Activated naive CD8-positive, alpha-beta T cell treated with anti-CD3 and anti-CD28 coated beads, Interleukin-2, amount 10 ng/mL, durations not matched to agents 7 days and 5 days (primary cell): ENCODE measurements at regions of chr1 and their contacts with region 1.

Region 1: DNA sequence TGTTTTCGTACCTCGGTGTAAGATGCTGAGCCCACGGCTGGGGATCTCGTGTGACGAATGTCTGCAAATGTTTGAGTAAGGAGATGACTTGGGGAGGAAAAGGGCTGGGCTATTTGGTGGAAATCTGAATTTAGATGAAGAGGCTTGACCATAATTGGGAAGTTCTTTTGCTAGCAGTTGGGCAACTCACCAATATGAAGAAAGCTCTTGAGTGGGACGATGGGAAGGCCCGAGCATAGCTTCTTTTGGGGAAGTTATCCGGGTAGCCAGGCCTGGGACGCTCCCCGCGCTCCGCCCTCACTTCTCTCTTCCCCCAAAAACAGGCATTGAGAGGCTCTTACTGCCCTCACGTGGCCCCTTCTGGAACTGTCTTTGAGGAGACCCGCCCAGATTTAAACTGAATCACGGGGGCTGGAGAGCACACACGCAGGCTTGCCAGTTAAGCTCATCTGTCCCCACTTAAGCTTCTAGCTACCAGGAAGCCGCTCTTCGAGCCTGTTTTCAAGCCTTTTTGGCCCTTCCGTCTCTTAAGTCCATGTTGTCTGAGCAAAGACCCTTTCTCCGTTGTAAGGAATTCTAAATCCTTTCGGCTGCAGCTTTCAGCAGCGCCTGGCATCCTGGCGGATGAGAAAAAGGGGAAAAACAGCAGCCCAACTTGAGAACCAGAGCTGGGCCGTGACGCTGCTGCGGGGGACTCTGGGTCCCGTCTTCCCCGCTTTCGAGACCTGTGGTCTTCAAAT is 93.1 kb downstream of the NID1 start:
- DNase-seq: peak; percentile 88
- ATAC-seq: peak; percentile 98
- H3K4me3 Mint-ChIP-seq: peak overlapping the region; percentile 83
- H3K27ac Mint-ChIP-seq: peak overlapping the region; percentile 96
- H3K4me1 Mint-ChIP-seq: peaks cover 19% of the 10 kb centered on the region
- H3K27me3 Mint-ChIP-seq: no peaks in the 10 kb centered on the region

Region 2: DNA sequence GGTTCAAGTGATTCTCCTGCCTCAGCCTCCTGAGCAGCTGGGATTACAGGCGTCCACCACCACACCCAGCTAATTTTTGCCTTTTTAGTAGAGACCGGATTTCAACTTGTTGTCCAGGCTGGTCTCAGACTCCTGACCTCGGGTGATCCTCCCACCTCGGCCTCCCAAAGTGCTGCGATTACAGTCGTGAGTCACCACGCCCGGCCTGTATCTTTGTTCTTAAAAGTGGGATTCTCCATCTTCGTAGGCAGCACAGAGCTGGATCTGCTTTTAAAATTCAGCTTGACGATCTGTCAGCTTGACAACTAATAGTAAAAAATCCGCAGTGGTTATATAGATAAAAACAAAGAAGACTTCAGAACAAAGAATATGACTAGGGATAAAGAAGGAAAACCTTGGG is 319.4 kb before region 1 on chr1:
- POLR2A ChIA-PET with region 1: interaction called, 10 read pairs
- DNase-seq: no peak
- ATAC-seq: no peak
- H3K4me3 Mint-ChIP-seq: no peak overlapping the region
- H3K27ac Mint-ChIP-seq: no peak overlapping the region
- H3K4me1 Mint-ChIP-seq: peaks cover 9% of the 10 kb centered on the region
- H3K27me3 Mint-ChIP-seq: peaks cover 51% of the 10 kb centered on the region

Region 3: GRCh38 chr1:235866913-235867845 is 104.6 kb before region 1 on chr1:
- POLR2A ChIA-PET with region 1: interaction called, 60 read pairs
- DNase-seq: peak; percentile 100
- ATAC-seq: peak; percentile 67
- H3K4me3 Mint-ChIP-seq: peak overlapping the region; percentile 98
- H3K27ac Mint-ChIP-seq: peak overlapping the region; percentile 97
- H3K4me1 Mint-ChIP-seq: peaks cover 52% of the 10 kb centered on the region
- H3K27me3 Mint-ChIP-seq: no peaks in the 10 kb centered on the region

Region 4: DNA sequence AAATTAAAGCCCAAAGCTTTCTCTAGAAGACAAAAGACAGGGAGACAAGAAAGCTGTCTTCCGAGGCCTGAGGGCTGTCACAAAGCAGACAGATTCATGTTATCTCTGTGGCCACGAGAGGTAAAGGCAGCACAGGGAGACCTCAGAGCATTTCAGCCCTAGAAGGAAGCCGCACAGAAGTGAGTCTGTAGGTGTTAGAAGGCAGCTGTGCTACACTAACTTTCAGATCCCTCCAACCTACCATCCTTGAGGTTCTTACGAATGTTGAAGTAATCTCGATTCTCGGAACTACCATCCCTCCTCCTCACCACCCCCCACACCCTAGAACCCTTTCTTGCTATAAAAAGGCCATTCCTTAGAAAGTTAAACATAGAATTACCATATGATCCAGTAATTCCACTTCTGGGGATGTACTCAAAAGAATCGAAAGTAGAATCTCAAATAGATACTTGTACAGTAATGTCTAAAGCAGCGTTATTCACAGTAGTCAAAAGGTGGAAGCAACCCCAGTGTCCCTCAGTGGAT is 83.6 kb before region 1 on chr1:
- POLR2A ChIA-PET with region 1: interaction called, 12 read pairs
- DNase-seq: no peak
- ATAC-seq: peak; percentile 96
- H3K4me3 Mint-ChIP-seq: peak overlapping the region; percentile 77
- H3K27ac Mint-ChIP-seq: peak overlapping the region; percentile 95
- H3K4me1 Mint-ChIP-seq: peaks cover 42% of the 10 kb centered on the region
- H3K27me3 Mint-ChIP-seq: no peaks in the 10 kb centered on the region

Region 5: DNA sequence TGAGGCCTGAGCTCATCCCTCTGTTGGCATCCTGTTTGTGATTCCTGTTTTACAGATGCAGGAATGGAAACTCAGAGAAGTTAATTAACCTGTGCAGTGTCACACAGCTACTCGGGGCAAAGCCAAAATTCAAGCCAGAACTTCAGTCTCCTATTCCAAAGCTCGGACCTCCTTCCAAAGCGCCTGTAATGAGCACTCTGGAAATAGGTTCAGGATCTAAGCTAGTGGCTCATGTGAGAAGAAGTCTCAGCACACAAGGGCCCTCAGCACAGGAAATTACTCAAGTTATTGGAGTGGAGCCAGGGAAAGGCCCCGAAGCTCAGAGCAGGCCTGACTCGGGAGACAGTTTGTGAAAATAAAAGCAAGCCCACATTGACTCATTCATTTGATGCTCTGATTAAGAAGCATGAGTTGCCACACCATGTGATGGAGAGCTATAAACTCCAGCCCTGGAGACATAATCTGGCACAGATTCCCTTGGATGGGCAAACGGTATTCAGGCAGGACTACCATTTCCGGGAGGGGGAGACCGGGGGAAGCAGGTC is 54.4 kb before region 1 on chr1:
- POLR2A ChIA-PET with region 1: no interaction called
- DNase-seq: no peak
- ATAC-seq: peak; percentile 78
- H3K4me3 Mint-ChIP-seq: peak overlapping the region; percentile 57
- H3K27ac Mint-ChIP-seq: no peak overlapping the region
- H3K4me1 Mint-ChIP-seq: peaks cover 18% of the 10 kb centered on the region
- H3K27me3 Mint-ChIP-seq: no peaks in the 10 kb centered on the region

Region 6: DNA sequence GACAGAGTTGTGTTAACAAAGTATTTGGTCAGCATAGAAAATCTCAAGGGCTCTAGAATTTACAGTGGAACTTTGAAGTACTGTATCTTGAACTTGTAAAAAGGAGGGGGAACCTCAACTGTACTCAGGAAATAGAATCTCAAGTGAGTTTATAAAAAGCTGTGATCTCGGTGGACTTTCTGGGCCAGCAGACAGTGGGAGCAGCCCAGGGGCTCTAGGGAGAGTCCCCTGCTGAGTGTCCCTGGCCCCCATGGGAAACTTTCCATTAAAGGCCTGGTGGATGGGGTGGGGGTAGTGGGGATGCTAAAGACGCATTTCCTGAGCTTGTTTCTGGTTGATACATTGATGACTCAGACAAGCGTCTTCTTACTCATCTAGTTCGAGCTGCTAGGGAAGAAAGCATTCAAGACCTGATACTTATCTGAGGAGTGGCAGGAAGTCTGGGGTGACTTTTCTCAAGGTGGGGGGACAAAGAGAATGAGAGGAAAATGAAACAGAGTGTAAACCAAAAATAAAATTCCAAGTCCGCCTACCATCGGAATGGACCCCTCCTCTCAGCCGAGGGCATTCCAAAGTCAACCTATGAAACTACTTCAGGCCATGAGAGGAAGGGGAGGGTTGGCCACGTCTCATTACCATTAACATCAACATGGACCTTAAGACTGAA is 27.7 kb after region 1 on chr1:
- POLR2A ChIA-PET with region 1: interaction called, 10 read pairs
- DNase-seq: peak; percentile 72
- ATAC-seq: peak; percentile 87
- H3K4me3 Mint-ChIP-seq: peak overlapping the region; percentile 67
- H3K27ac Mint-ChIP-seq: peak overlapping the region; percentile 96
- H3K4me1 Mint-ChIP-seq: peaks cover 51% of the 10 kb centered on the region
- H3K27me3 Mint-ChIP-seq: no peaks in the 10 kb centered on the region